ENCODE measurements at regions of chr20 and their contacts with region 1.

Region 1: GRCh38 chr20:48657475-48658470 is 170.0 kb downstream of the PREX1 start:
- DNase-seq: peak; percentile 76
- H3K4me3 Mint-ChIP-seq: no peak overlapping the region
- H3K27ac Mint-ChIP-seq: no peak overlapping the region
- H3K4me1 Mint-ChIP-seq: peaks cover 16% of the 10 kb centered on the region
- H3K27me3 Mint-ChIP-seq: no peaks in the 10 kb centered on the region

Region 2: DNA sequence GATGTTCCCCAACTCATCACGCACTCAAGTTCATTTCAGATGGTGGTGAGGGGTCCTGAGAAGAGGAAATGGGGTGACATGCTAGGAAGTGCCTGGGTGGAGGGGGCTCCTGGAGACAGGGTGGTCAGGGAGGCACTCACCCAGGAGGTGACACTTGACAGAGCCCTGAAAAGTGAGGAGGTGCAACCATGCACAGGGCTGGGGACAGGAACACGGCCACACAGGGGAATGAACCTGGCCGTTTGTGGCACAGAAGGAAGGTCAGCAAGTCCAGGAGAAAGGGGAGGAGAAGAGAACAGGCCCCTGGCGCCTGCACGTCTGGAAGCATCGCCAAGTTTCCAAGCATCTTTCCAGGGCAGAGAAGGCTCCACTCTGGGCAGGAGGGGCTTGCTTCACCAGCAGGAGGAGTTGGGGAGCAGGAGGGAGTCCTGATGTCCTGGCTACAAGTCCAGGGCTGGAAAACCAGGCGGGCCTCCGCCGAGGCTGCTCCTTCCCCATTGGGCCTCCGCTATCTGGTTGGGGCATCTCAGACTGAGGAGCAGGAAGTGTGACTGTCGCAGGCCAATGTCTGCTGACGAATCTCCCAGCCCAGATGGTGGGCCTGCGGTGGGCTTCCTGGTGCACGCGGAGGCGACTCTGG is 252.0 kb before region 1 on chr20:
- CTCF ChIA-PET with region 1: no interaction called
- POLR2A ChIA-PET with region 1: no interaction called
- DNase-seq: no peak
- H3K4me3 Mint-ChIP-seq: no peak overlapping the region
- H3K27ac Mint-ChIP-seq: no peak overlapping the region
- H3K4me1 Mint-ChIP-seq: no peaks in the 10 kb centered on the region
- H3K27me3 Mint-ChIP-seq: peaks cover 14% of the 10 kb centered on the region

Region 3: GRCh38 chr20:48574393-48574792 is 83.4 kb before region 1 on chr20:
- CTCF ChIA-PET with region 1: no interaction called
- POLR2A ChIA-PET with region 1: no interaction called
- DNase-seq: no peak
- H3K4me3 Mint-ChIP-seq: no peak overlapping the region
- H3K27ac Mint-ChIP-seq: no peak overlapping the region
- H3K4me1 Mint-ChIP-seq: no peaks in the 10 kb centered on the region
- H3K27me3 Mint-ChIP-seq: no peaks in the 10 kb centered on the region

Region 4: GRCh38 chr20:48897995-48898597 is 240.3 kb after region 1 on chr20:
- CTCF ChIA-PET with region 1: interaction called, 11 read pairs
- POLR2A ChIA-PET with region 1: no interaction called
- DNase-seq: no peak
- H3K4me3 Mint-ChIP-seq: no peak overlapping the region
- H3K27ac Mint-ChIP-seq: no peak overlapping the region
- H3K4me1 Mint-ChIP-seq: no peaks in the 10 kb centered on the region
- H3K27me3 Mint-ChIP-seq: peaks cover 18% of the 10 kb centered on the region

Region 5: GRCh38 chr20:48904365-48905296 is 246.9 kb after region 1 on chr20:
- CTCF ChIA-PET with region 1: interaction called, 32 read pairs
- POLR2A ChIA-PET with region 1: no interaction called
- DNase-seq: peak; percentile 79
- H3K4me3 Mint-ChIP-seq: no peak overlapping the region
- H3K27ac Mint-ChIP-seq: peak overlapping the region; percentile 28
- H3K4me1 Mint-ChIP-seq: peaks cover 9% of the 10 kb centered on the region
- H3K27me3 Mint-ChIP-seq: peaks cover 2% of the 10 kb centered on the region